ENCODE measurements at regions of chr5 and their contacts with region 1.

Region 1: GRCh38 chr5:139633295-139634027 is 14.7 kb upstream of the CXXC5 start:
- DNase-seq: peak; percentile 82
- H3K4me3 Mint-ChIP-seq: no peak overlapping the region
- H3K27ac Mint-ChIP-seq: peak overlapping the region; percentile 55
- H3K4me1 Mint-ChIP-seq: peaks cover 40% of the 10 kb centered on the region
- H3K27me3 Mint-ChIP-seq: no peaks in the 10 kb centered on the region
- CTCF ChIP-seq: peak; percentile 98

Region 2: DNA sequence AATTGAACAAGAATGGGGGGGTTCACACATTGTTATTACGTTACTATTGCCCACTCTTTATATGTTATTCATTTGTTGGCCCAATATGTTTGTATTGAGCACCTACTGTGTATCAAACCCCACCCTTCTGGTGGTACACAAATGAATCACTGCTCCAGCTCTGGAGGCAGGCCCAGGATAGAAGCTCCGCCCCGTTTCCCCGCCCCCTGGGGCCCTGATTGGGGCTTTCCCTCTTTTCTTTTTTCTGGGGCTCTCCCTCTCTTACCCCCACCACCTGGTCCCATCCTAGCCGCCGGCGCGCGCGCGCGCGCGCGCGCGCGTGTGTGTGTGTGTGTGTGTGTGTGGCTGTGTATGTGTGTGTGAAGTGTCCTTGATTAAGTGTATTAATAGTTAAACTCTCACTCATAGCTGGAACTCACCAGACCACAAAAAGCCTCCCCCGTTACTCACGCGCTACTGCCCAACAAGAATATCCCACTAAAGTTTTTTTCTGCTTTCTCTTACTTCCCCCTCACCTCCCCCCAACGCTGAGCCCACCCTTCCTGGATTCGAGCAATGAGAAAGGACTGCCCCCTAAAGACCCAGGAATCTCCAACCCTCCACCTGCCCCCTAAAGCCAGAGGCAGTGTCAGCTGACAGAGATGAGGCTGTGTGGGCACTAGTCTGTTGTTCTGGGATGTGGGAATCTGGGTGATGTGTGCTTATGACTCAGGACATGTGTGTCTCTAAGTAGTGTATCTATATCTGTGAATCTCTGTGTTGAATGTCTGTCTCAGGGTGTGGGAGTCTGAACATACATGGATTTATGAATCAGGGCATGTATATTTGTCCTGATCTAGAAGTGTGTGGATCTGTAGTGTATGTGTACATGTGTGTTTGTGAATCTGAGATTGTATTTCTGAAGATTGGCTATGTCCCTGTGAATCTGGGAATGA is 18.7 kb after region 1 on chr5:
- CTCF ChIA-PET with region 1: interaction called, 68 read pairs
- intact Hi-C with region 1: loop called (anchors 1 kb)
- DNase-seq: peak; percentile 94
- H3K4me3 Mint-ChIP-seq: peak overlapping the region; percentile 99
- H3K27ac Mint-ChIP-seq: peak overlapping the region; percentile 32
- H3K4me1 Mint-ChIP-seq: peaks cover 67% of the 10 kb centered on the region
- H3K27me3 Mint-ChIP-seq: no peaks in the 10 kb centered on the region
- CTCF ChIP-seq: no peak

Region 3: GRCh38 chr5:139670369-139671095 is 37.1 kb after region 1 on chr5:
- CTCF ChIA-PET with region 1: interaction called, 11 read pairs
- intact Hi-C with region 1: no loop called
- DNase-seq: no peak
- H3K4me3 Mint-ChIP-seq: no peak overlapping the region
- H3K27ac Mint-ChIP-seq: no peak overlapping the region
- H3K4me1 Mint-ChIP-seq: peaks cover 60% of the 10 kb centered on the region
- H3K27me3 Mint-ChIP-seq: no peaks in the 10 kb centered on the region
- CTCF ChIP-seq: peak; percentile 12

Region 4: GRCh38 chr5:139711067-139711905 is 77.8 kb after region 1 on chr5:
- CTCF ChIA-PET with region 1: interaction called, 10 read pairs
- intact Hi-C with region 1: no loop called
- DNase-seq: peak; percentile 46
- H3K4me3 Mint-ChIP-seq: peak overlapping the region; percentile 71
- H3K27ac Mint-ChIP-seq: no peak overlapping the region
- H3K4me1 Mint-ChIP-seq: peaks cover 16% of the 10 kb centered on the region
- H3K27me3 Mint-ChIP-seq: peaks cover 28% of the 10 kb centered on the region
- CTCF ChIP-seq: no peak

Region 5: GRCh38 chr5:139863855-139864558 is 230.5 kb after region 1 on chr5:
- CTCF ChIA-PET with region 1: no interaction called
- intact Hi-C with region 1: loop called (anchors 10 kb)
- DNase-seq: peak; percentile 80
- H3K4me3 Mint-ChIP-seq: no peak overlapping the region
- H3K27ac Mint-ChIP-seq: no peak overlapping the region
- H3K4me1 Mint-ChIP-seq: no peaks in the 10 kb centered on the region
- H3K27me3 Mint-ChIP-seq: peaks cover 60% of the 10 kb centered on the region
- CTCF ChIP-seq: peak; percentile 94

Measured in Calu3 (cell line).